Naive thymus-derived CD4-positive, alpha-beta T cell (primary cell): ENCODE measurements at regions of chr3 and their contacts with region 1.

Region 1: GRCh38 chr3:133487920-133488540 is 85.5 kb upstream of the CDV3 start:
- DNase-seq: peak in 8 of 9 donors; percentile 40 to 67 (median 50)
- ATAC-seq: peak; percentile 72
- H3K4me3 ChIP-seq: no peak overlapping the region
- H3K4me3 Mint-ChIP-seq: peak overlapping the region in 6 of 10 donors; percentile 5 to 73 (median 32)
- H3K27ac ChIP-seq: peak overlapping the region; percentile 34
- H3K27ac Mint-ChIP-seq: peak overlapping the region in 8 of 9 donors; percentile 90 to 98 (median 96)
- H3K4me1 ChIP-seq: peaks cover 22 to 47% of the 10 kb centered on the region in 2 donors
- H3K4me1 Mint-ChIP-seq: peaks cover 22 to 52% (median 51%) of the 10 kb centered on the region in 7 donors
- H3K27me3 ChIP-seq: no peaks in the 10 kb centered on the region
- H3K27me3 Mint-ChIP-seq: no peaks in the 10 kb centered on the region

Region 2: DNA sequence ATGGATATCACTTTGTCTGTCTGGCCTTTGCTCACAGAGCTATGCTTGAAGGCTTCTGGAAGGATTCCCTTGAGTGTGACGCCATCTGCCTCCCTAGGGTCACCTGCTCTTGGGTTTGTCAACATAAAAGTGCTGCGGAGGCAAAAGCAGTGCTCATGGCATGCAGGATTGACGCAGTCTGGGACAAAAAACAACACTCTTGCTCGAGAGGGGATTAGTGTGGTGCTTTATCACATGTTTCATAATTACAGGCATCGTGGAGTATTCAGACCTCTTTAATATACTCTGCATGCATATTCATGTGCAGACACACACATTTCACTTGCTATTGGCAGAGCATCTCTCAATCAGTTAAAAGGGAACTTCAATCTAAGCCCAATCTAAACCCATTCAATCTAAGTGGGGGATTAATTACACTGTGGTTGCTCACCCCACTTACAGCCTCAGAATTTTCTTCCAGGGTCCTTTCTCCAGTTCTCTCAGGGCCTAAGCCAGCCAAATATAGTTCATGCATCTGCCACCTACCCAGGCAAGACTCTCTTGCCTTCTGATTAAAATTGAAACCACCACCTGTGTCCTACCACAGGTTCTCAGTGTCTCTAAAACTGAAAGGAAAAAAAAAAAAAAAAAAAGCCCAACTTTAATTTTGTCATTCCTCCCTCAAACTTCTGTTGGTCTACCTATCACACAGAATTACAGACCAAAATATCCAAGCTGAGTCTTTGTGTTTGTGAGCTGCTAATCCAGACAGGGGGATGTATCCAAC is 12.6 kb before region 1 on chr3:
- CTCF ChIA-PET with region 1: interaction called, 9 read pairs
- POLR2A ChIA-PET with region 1: interaction called, 3 read pairs
- intact Hi-C with region 1: loop called in 1 of 2 experiments (anchors 2 kb)
- DNase-seq: no peak
- ATAC-seq: peak; percentile 61
- H3K4me3 ChIP-seq: no peak overlapping the region
- H3K4me3 Mint-ChIP-seq: peak overlapping the region in 1 of 10 donors; percentile 27
- H3K27ac ChIP-seq: no peak overlapping the region
- H3K27ac Mint-ChIP-seq: peak overlapping the region in 4 of 9 donors; percentile 17 to 82 (median 62)
- H3K4me1 ChIP-seq: peaks cover 0 to 5% of the 10 kb centered on the region in 2 donors
- H3K4me1 Mint-ChIP-seq: peaks cover 14 to 49% (median 39%) of the 10 kb centered on the region in 7 donors
- H3K27me3 ChIP-seq: no peaks in the 10 kb centered on the region
- H3K27me3 Mint-ChIP-seq: no peaks in the 10 kb centered on the region

Region 3: GRCh38 chr3:133578548-133579191 is 90.6 kb after region 1 on chr3:
- CTCF ChIA-PET with region 1: interaction called, 80 read pairs
- POLR2A ChIA-PET with region 1: interaction called, 179 read pairs
- intact Hi-C with region 1: loop called (anchors 1 kb)
- DNase-seq: no peak
- ATAC-seq: no peak
- H3K4me3 ChIP-seq: peak overlapping the region; percentile 12
- H3K4me3 Mint-ChIP-seq: peak overlapping the region; percentile 39 to 99 (median 90)
- H3K27ac ChIP-seq: no peak overlapping the region
- H3K27ac Mint-ChIP-seq: peak overlapping the region in 4 of 9 donors; percentile 31 to 86 (median 61)
- H3K4me1 ChIP-seq: peaks cover 30 to 49% of the 10 kb centered on the region in 2 donors
- H3K4me1 Mint-ChIP-seq: peaks cover 45 to 83% (median 76%) of the 10 kb centered on the region in 7 donors
- H3K27me3 ChIP-seq: no peaks in the 10 kb centered on the region
- H3K27me3 Mint-ChIP-seq: no peaks in the 10 kb centered on the region

Region 4: DNA sequence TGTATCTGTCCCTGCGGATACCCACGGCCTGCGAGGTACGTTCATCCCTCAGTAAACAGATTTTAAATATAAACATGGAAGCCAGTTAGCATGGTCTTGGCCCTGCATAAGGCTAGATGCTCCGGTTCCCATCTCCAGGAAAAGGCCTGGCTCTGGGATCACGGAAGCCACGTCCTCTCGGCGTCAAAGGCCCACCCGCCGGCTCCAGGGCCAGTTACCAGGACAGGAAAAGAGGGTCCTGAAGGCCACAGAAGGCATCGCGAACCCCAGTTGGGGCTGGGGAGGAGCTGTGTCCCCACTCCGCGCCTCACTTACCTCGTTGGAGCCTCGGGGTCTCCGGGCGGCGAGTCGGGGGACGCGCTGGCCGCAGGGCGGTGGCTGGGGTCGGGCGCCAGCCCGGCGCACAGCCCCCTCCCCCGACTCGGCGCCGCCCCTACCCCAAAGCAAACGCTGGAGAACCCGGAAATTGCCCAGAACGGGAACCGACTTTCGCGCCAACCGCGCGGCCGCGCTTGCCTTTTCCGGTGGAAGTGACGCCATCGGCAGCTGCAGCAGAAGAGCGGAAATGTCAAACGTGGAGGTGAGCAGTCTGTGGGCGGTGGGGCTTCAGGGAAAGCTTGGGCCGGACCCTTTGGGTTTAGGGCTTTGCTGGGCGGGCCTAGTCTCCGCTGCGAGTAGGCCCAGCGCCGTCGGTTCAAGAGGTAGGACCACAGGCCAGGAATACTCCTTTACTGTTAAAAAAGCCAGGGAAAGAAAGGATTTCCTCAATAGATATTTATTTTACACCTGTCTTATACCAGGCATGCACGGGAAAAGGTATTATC is 173.6 kb after region 1 on chr3 and contains the start of gene TOPBP1:
- CTCF ChIA-PET with region 1: interaction called, 3 read pairs
- POLR2A ChIA-PET with region 1: interaction called, 3 read pairs
- intact Hi-C with region 1: loop called in 1 of 2 experiments (anchors 1 kb)
- DNase-seq: peak; percentile 68 to 88 (median 85)
- ATAC-seq: peak; percentile 90
- H3K4me3 ChIP-seq: peak within 1 kb of the TSS; percentile 80
- H3K4me3 Mint-ChIP-seq: peak within 1 kb of the TSS; percentile 90 to 99 (median 97)
- H3K27ac ChIP-seq: peak within 1 kb of the TSS; percentile 79
- H3K27ac Mint-ChIP-seq: peak within 1 kb of the TSS; percentile 93 to 99 (median 97)
- H3K4me1 ChIP-seq: peaks cover 8 to 25% of the 10 kb centered on the region in 2 donors
- H3K4me1 Mint-ChIP-seq: peaks cover 30 to 53% (median 46%) of the 10 kb centered on the region in 7 donors
- H3K27me3 ChIP-seq: no peaks in the 10 kb centered on the region
- H3K27me3 Mint-ChIP-seq: no peaks in the 10 kb centered on the region
- total RNA-seq, gene TOPBP1: 26.3 to 73.8 (median 37.6) TPM

Region 5: GRCh38 chr3:133821767-133822638 is 334.0 kb after region 1 on chr3:
- CTCF ChIA-PET with region 1: interaction called, 5 read pairs
- POLR2A ChIA-PET with region 1: no interaction called
- intact Hi-C with region 1: loop called in 1 of 2 experiments (anchors 1 kb)
- DNase-seq: no peak
- ATAC-seq: no peak
- H3K4me3 ChIP-seq: no peak overlapping the region
- H3K4me3 Mint-ChIP-seq: no peak overlapping the region
- H3K27ac ChIP-seq: no peak overlapping the region
- H3K27ac Mint-ChIP-seq: peak overlapping the region in 2 of 9 donors; percentile 10 to 23
- H3K4me1 ChIP-seq: no peaks in the 10 kb centered on the region
- H3K4me1 Mint-ChIP-seq: peaks cover 0 to 6% (median 3%) of the 10 kb centered on the region in 7 donors
- H3K27me3 ChIP-seq: no peaks in the 10 kb centered on the region
- H3K27me3 Mint-ChIP-seq: no peaks in the 10 kb centered on the region

Region 6: GRCh38 chr3:133927540-133928066 is 439.6 kb after region 1 on chr3:
- CTCF ChIA-PET with region 1: no interaction called
- POLR2A ChIA-PET with region 1: no interaction called
- intact Hi-C with region 1: loop called in 1 of 2 experiments (anchors 1 kb)
- DNase-seq: peak; percentile 64 to 88 (median 81)
- ATAC-seq: peak; percentile 97
- H3K4me3 ChIP-seq: peak overlapping the region; percentile 51
- H3K4me3 Mint-ChIP-seq: peak overlapping the region; percentile 58 to 85 (median 74)
- H3K27ac ChIP-seq: peak overlapping the region; percentile 43
- H3K27ac Mint-ChIP-seq: peak overlapping the region in 2 of 9 donors; percentile 56 to 69
- H3K4me1 ChIP-seq: peaks cover 0 to 4% of the 10 kb centered on the region in 2 donors
- H3K4me1 Mint-ChIP-seq: peaks cover 4 to 14% (median 5%) of the 10 kb centered on the region in 7 donors
- H3K27me3 ChIP-seq: peaks cover 0 to 3% of the 10 kb centered on the region in 2 donors
- H3K27me3 Mint-ChIP-seq: peaks cover 5 to 26% (median 10%) of the 10 kb centered on the region in 5 donors